IMR-90 (cell line): ENCODE measurements at regions of chr18 and their contacts with region 1.

Region 1: GRCh38 chr18:9782073-9782857 is 74.2 kb downstream of the RAB31 start:
- DNase-seq: peak; percentile 96
- ATAC-seq: peak; percentile 92
- H3K4me3 ChIP-seq: no peak overlapping the region
- H3K27ac ChIP-seq: peak overlapping the region; percentile 71
- H3K4me1 ChIP-seq: peaks cover 7% of the 10 kb centered on the region
- H3K27me3 ChIP-seq: no peaks in the 10 kb centered on the region
- CTCF ChIP-seq: no peak
- POLR2A ChIP-seq: no peak
- RAD21 ChIP-seq: no peak

Region 2: GRCh38 chr18:9743200-9744016 is 38.9 kb before region 1 on chr18:
- CTCF ChIA-PET with region 1: no interaction called
- POLR2A ChIA-PET with region 1: no interaction called
- dilution Hi-C with region 1: no loop called
- in situ Hi-C with region 1: no loop called
- intact Hi-C with region 1: loop called (anchors 5 kb)
- DNase-seq: peak; percentile 98
- ATAC-seq: peak; percentile 90
- H3K4me3 ChIP-seq: no peak overlapping the region
- H3K27ac ChIP-seq: no peak overlapping the region; the same call in 1 of the 2 replicates
- H3K4me1 ChIP-seq: peaks cover 10% of the 10 kb centered on the region
- H3K27me3 ChIP-seq: no peaks in the 10 kb centered on the region; the same call in 1 of the 2 replicates
- CTCF ChIP-seq: no peak
- POLR2A ChIP-seq: peak; percentile 46; the same call in 1 of the 2 replicates
- RAD21 ChIP-seq: peak; percentile 24; the same call in 1 of the 2 replicates

Region 3: GRCh38 chr18:9766076-9766481 is 16.2 kb before region 1 on chr18:
- CTCF ChIA-PET with region 1: no interaction called
- POLR2A ChIA-PET with region 1: no interaction called
- dilution Hi-C with region 1: no loop called
- in situ Hi-C with region 1: no loop called
- intact Hi-C with region 1: loop called (anchors 1 kb)
- DNase-seq: no peak
- ATAC-seq: no peak
- H3K4me3 ChIP-seq: no peak overlapping the region
- H3K27ac ChIP-seq: no peak overlapping the region
- H3K4me1 ChIP-seq: no peaks in the 10 kb centered on the region
- H3K27me3 ChIP-seq: no peaks in the 10 kb centered on the region
- CTCF ChIP-seq: no peak
- POLR2A ChIP-seq: no peak
- RAD21 ChIP-seq: no peak

Region 4: DNA sequence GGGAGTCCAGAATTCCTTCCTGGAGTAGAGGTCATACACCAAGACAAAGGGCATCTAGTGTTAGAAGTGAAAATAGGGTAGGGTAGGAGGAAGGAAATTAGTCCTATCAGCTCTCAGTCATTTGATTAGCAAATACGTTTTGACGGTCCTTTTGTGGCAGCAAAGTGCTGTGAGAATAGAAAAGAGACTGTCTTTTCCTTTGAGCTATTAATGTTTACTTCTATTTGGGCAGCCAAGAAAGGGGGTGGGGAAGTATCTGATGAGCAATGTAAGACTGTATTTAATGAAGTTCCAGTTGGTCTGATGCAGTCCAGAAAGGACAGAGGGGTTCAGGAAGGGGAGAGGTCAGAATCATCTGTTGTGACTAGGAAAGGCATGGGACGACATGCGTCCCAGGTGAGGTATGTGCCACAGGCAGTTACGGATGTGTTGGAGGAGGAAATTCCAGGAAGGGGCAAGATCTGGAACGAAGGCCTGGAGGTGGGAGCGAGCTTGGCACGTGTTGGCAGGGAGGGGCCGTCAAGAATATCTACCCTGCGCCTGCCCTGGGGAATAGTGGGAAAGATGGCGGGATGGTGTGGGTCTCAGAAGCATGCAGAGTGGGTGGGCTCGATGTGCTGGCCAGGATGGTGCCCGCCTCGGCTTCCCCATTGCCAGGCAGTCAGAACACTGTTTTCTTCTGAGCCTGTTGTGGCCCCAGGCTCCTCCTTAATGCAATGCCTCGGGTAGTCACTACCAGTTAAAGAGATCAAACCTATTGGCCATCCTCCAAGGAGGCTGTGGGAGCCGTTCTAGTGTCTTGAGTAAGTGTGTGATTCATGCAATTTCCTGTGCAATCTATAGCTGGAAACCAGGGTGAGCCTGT is 45.6 kb after region 1 on chr18:
- CTCF ChIA-PET with region 1: no interaction called
- POLR2A ChIA-PET with region 1: no interaction called
- dilution Hi-C with region 1: no loop called
- in situ Hi-C with region 1: no loop called
- intact Hi-C with region 1: loop called (anchors 2 kb)
- DNase-seq: peak; percentile 100
- ATAC-seq: peak; percentile 80
- H3K4me3 ChIP-seq: no peak overlapping the region
- H3K27ac ChIP-seq: peak overlapping the region; percentile 90
- H3K4me1 ChIP-seq: peaks cover 32% of the 10 kb centered on the region
- H3K27me3 ChIP-seq: no peaks in the 10 kb centered on the region
- CTCF ChIP-seq: no peak
- POLR2A ChIP-seq: no peak
- RAD21 ChIP-seq: peak; percentile 25

Region 5: GRCh38 chr18:10131460-10132395 is 349.5 kb after region 1 on chr18:
- CTCF ChIA-PET with region 1: no interaction called
- POLR2A ChIA-PET with region 1: no interaction called
- dilution Hi-C with region 1: no loop called
- in situ Hi-C with region 1: no loop called
- intact Hi-C with region 1: no loop called
- DNase-seq: no peak
- ATAC-seq: peak; percentile 27
- H3K4me3 ChIP-seq: no peak overlapping the region
- H3K27ac ChIP-seq: no peak overlapping the region
- H3K4me1 ChIP-seq: no peaks in the 10 kb centered on the region
- H3K27me3 ChIP-seq: peaks cover 15% of the 10 kb centered on the region
- CTCF ChIP-seq: no peak
- POLR2A ChIP-seq: no peak
- RAD21 ChIP-seq: no peak